ENCODE measurements at regions of chr2 and their contacts with region 1.

Region 1: GRCh38 chr2:63849381-63850203 is 7.9 kb downstream of the UGP2 start:
- DNase-seq: no peak
- ATAC-seq: peak; percentile 81
- H3K4me3 ChIP-seq: no peak overlapping the region
- H3K27ac ChIP-seq: peak overlapping the region; percentile 26; the same call in 1 of the 2 replicates
- H3K4me1 ChIP-seq: peaks cover 14% of the 10 kb centered on the region
- H3K27me3 ChIP-seq: no peaks in the 10 kb centered on the region
- CTCF ChIP-seq: no peak
- POLR2A ChIP-seq: no peak
- RAD21 ChIP-seq: no peak

Region 2: GRCh38 chr2:63600881-63601460 is 248.6 kb before region 1 on chr2:
- CTCF ChIA-PET with region 1: no interaction called
- POLR2A ChIA-PET with region 1: no interaction called
- dilution Hi-C with region 1: no loop called
- in situ Hi-C with region 1: loop called (anchors 10 kb)
- intact Hi-C with region 1: no loop called
- DNase-seq: no peak
- ATAC-seq: no peak
- H3K4me3 ChIP-seq: no peak overlapping the region
- H3K27ac ChIP-seq: no peak overlapping the region
- H3K4me1 ChIP-seq: no peaks in the 10 kb centered on the region
- H3K27me3 ChIP-seq: no peaks in the 10 kb centered on the region
- CTCF ChIP-seq: no peak
- POLR2A ChIP-seq: no peak
- RAD21 ChIP-seq: no peak

Measured in IMR-90 (cell line).